Activated CD4-positive, alpha-beta memory T cell treated with anti-CD3 and anti-CD28 coated beads, Interleukin-2, amount 10 ng/mL, durations not matched to agents 7 days and 5 days (primary cell): ENCODE measurements at regions of chr9 and their contacts with region 1.

Region 1: GRCh38 chr9:92325269-92325990 is at the starts of genes CENPP and NOL8:
- DNase-seq: peak; percentile 88
- H3K4me3 Mint-ChIP-seq: peak within 1 kb of the TSS; percentile 98
- H3K27ac Mint-ChIP-seq: peak within 1 kb of the TSS; percentile 94
- H3K4me1 Mint-ChIP-seq: peaks cover 39% of the 10 kb centered on the region
- H3K27me3 Mint-ChIP-seq: no peaks in the 10 kb centered on the region
- total RNA-seq, gene CENPP: 18.8 to 22.0 TPM
- total RNA-seq, gene NOL8: 48.0 to 48.9 TPM

Region 2: DNA sequence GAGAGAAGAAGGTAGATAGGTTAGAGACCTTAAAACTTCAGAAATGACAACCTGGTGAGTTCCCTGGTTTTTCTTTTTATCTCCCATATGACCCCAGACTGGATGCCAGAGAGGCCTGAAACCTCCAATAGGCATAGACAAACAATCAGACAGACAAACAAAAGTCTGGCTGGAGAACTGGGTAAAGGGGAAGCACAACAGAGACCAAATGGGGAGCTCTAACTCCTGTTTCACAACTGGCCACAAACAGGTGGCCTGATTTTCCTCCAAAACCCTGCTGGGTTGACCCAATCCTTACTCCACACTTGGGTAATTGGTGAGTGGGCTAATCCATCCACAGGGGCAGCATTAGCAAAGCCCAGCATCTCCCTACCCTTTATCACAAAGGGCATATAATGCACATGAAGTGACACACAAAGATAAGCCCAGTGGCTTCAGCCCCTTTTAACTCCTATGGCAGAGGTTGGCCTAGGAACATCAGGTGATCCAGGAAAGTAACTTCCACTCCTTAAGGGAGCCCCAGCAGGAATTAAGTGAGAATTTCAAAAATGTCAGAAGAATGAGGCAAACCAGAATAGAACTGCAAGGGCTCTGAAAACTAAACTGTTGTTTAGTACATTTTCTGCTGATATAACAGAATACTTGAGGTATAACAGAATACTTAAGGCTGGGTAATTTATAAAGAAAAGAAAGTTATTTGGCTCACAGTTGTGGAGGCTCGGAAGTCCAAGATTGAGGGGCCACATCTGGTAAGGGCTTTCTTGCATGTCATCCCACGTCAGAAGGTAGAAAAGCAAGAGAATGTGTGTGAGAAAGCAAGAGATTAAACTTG is 314.5 kb before region 1 on chr9:
- CTCF ChIA-PET with region 1: no interaction called
- POLR2A ChIA-PET with region 1: no interaction called
- DNase-seq: no peak
- H3K4me3 Mint-ChIP-seq: no peak overlapping the region
- H3K27ac Mint-ChIP-seq: no peak overlapping the region
- H3K4me1 Mint-ChIP-seq: no peaks in the 10 kb centered on the region
- H3K27me3 Mint-ChIP-seq: peaks cover 29% of the 10 kb centered on the region

Region 3: GRCh38 chr9:92180669-92181181 is 144.7 kb before region 1 on chr9:
- CTCF ChIA-PET with region 1: no interaction called
- POLR2A ChIA-PET with region 1: no interaction called
- DNase-seq: no peak
- H3K4me3 Mint-ChIP-seq: no peak overlapping the region
- H3K27ac Mint-ChIP-seq: no peak overlapping the region
- H3K4me1 Mint-ChIP-seq: no peaks in the 10 kb centered on the region
- H3K27me3 Mint-ChIP-seq: peaks cover 15% of the 10 kb centered on the region

Region 4: GRCh38 chr9:92293452-92294296 is 31.8 kb before region 1 on chr9 and contains the start of gene IARS1:
- CTCF ChIA-PET with region 1: no interaction called
- POLR2A ChIA-PET with region 1: interaction called, 31 read pairs
- DNase-seq: peak; percentile 100
- H3K4me3 Mint-ChIP-seq: peak within 1 kb of the TSS; percentile 94
- H3K27ac Mint-ChIP-seq: peak within 1 kb of the TSS; percentile 99
- H3K4me1 Mint-ChIP-seq: peaks cover 72% of the 10 kb centered on the region
- H3K27me3 Mint-ChIP-seq: no peaks in the 10 kb centered on the region
- total RNA-seq, gene IARS1: 145 to 152 TPM

Region 5: DNA sequence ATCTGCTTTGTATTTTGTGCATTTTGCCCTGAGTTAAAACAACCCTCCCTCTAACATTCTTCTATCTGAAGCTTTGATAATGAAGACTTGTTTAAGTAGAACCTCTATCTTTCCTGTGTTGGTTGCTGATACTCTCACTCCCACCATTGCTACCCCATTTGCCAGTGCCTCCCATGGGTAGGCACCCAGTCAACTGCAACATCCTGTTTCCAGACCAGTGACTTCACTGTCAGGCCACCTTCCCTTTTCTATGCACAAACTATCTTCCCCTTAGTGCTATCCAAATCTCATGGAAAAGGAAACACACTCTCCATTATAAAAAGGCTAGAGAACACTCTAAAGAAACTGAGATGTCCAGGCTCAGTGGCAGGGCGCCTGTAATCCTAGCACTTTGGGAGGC is 26.3 kb before region 1 on chr9:
- CTCF ChIA-PET with region 1: no interaction called
- POLR2A ChIA-PET with region 1: interaction called, 31 read pairs
- DNase-seq: no peak
- H3K4me3 Mint-ChIP-seq: no peak overlapping the region
- H3K27ac Mint-ChIP-seq: peak overlapping the region; percentile 32
- H3K4me1 Mint-ChIP-seq: peaks cover 42% of the 10 kb centered on the region
- H3K27me3 Mint-ChIP-seq: no peaks in the 10 kb centered on the region

Region 6: GRCh38 chr9:92312887-92313623 is 12.4 kb before region 1 on chr9:
- CTCF ChIA-PET with region 1: no interaction called
- POLR2A ChIA-PET with region 1: interaction called, 10 read pairs
- DNase-seq: no peak
- H3K4me3 Mint-ChIP-seq: no peak overlapping the region
- H3K27ac Mint-ChIP-seq: peak overlapping the region; percentile 13
- H3K4me1 Mint-ChIP-seq: peaks cover 42% of the 10 kb centered on the region
- H3K27me3 Mint-ChIP-seq: no peaks in the 10 kb centered on the region

Region 7: GRCh38 chr9:92384375-92384774 is 58.9 kb after region 1 on chr9:
- CTCF ChIA-PET with region 1: no interaction called
- POLR2A ChIA-PET with region 1: no interaction called
- DNase-seq: no peak
- H3K4me3 Mint-ChIP-seq: no peak overlapping the region
- H3K27ac Mint-ChIP-seq: no peak overlapping the region
- H3K4me1 Mint-ChIP-seq: peaks cover 1% of the 10 kb centered on the region
- H3K27me3 Mint-ChIP-seq: no peaks in the 10 kb centered on the region

Region 8: DNA sequence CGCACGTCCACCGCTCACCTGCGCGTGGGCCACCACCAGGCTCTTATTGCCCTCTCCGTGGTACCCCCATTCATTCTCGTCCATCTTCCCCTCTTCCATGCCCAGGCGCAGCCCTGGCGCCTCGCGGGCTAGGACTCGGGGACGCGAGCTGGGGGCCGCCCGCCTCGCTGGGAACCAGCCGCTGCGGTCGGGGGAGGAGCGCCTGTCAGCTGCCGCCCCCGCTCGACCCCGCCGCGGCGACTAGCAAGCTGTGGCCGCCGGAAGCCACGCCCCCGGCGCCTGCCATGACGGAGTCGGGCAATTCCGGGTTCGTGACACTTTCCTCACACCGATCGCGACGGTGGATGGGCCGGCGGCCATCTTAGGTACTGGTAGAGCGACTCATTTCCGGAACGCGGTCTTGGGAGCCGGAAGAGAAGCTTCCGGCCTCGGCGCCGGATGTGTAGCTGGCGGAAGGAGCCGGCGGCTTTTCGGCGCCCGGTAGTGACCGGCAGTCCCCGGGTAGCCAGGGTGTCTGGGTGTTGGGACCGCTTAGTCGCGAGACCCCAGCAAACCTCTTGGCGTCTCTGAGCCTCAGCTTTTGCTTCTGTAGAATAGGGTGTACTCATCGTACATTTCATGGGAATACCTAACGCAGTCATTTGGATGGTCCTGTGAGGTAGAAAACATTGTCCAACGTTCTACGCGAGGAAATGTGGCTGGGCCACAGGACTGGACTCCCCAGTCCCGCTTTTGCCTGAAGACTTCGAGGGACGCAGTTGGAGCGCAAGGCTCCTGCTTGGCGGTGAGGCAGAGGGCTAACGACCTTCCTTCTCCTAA is 344.7 kb after region 1 on chr9 and contains the start of gene IPPK:
- CTCF ChIA-PET with region 1: interaction called, 3 read pairs
- POLR2A ChIA-PET with region 1: interaction called, 31 read pairs
- DNase-seq: peak; percentile 98
- H3K4me3 Mint-ChIP-seq: peak within 1 kb of the TSS; percentile 96
- H3K27ac Mint-ChIP-seq: peak within 1 kb of the TSS; percentile 93
- H3K4me1 Mint-ChIP-seq: peaks cover 39% of the 10 kb centered on the region
- H3K27me3 Mint-ChIP-seq: no peaks in the 10 kb centered on the region
- total RNA-seq, gene IPPK: 11.4 to 11.5 TPM